Naive thymus-derived CD4-positive, alpha-beta T cell (primary cell): ENCODE measurements at regions of chr20 and their contacts with region 1.

Region 1: DNA sequence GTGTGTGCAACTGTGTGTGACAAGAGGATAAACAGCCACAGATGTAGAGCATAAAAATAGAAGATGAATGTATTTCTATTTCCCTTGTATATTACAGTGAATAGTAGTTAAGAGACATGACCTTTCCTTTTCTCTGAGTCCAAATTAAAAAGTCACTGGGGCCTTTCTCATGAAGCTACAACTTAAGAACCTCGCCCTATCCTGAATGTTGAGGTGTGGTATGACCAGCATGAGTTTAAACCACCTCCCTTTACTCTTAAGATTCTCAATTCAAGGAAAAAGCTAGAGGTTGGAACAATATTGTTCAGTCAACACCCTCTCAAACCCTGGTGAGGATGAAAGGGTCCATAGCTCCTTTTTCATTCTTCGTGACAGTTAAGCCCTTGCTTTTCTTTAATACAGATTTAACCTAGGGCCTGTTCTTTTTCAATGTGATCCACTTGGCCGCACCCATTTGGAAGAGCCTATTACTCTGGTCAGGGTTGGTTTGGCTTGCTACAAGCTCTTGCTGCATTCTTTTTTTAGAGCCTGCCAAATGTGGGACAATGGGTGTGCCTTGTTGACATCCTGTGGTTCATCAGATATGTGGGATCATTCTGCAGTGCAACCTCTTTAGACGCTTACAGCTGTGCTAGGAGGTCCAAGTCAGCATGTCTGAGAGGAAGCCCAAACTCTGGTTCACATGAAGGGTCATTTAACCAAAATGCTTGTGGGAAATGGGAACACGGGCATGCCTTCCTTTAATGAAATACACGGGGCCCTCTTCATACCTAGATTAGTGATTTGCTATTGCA is 290.0 kb downstream of the HAO1 start:
- DNase-seq: no peak
- ATAC-seq: no peak
- H3K4me3 ChIP-seq: no peak overlapping the region
- H3K4me3 Mint-ChIP-seq: no peak overlapping the region
- H3K27ac ChIP-seq: no peak overlapping the region
- H3K27ac Mint-ChIP-seq: no peak overlapping the region
- H3K4me1 ChIP-seq: no peaks in the 10 kb centered on the region
- H3K4me1 Mint-ChIP-seq: no peaks in the 10 kb centered on the region
- H3K27me3 ChIP-seq: no peaks in the 10 kb centered on the region
- H3K27me3 Mint-ChIP-seq: no peaks in the 10 kb centered on the region

Region 2: GRCh38 chr20:7608250-7608649 is 42.0 kb before region 1 on chr20:
- CTCF ChIA-PET with region 1: no interaction called
- POLR2A ChIA-PET with region 1: no interaction called
- intact Hi-C with region 1: loop called in 1 of 2 experiments (anchors 5 kb)
- DNase-seq: no peak
- ATAC-seq: no peak
- H3K4me3 ChIP-seq: no peak overlapping the region
- H3K4me3 Mint-ChIP-seq: no peak overlapping the region
- H3K27ac ChIP-seq: no peak overlapping the region
- H3K27ac Mint-ChIP-seq: no peak overlapping the region
- H3K4me1 ChIP-seq: no peaks in the 10 kb centered on the region
- H3K4me1 Mint-ChIP-seq: no peaks in the 10 kb centered on the region
- H3K27me3 ChIP-seq: no peaks in the 10 kb centered on the region
- H3K27me3 Mint-ChIP-seq: no peaks in the 10 kb centered on the region